Endothelial cell of umbilical vein (primary cell): ENCODE measurements at regions of chr10 and their contacts with region 1.

Region 1: DNA sequence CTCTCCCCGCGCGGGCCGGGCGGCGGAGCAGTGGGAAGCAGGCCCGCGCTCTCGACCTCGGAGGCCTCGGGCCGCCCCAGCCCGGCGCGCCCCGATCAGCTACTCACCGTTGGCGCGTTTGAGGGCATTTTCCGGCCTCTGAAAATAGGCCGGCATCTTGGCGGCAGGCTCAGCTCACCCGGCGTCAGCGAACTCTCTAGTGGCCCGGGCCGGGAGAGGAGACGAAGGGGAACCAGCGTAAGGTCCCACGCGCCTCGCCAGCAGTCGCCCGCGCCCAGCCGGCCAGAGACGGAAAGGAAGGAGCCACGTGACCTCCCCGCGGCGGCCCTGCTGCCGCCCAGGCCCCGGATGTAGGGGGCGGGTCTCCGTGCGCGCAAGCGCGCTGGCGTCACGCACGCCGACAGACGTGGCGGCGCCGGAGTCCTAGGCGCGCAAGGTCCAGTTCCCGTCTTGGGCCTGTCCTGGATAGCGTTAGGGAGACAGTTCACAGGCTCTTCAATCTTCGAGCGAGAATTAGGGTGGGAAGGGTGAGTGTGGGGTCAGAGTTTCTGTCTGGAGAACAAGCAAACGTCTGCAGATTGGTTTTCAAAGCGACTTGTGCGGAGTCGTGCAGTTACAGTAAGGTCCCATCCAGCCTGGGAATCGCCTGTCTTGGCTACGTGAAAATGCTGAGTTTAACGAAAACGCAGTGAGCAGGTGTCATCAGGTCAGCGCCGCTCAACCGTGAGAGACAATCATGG is at the start of gene EIF3A:
- DNase-seq: peak; percentile 95
- H3K4me3 ChIP-seq: peak within 1 kb of the TSS; percentile 80 to 97 (median 97)
- H3K27ac ChIP-seq: peak within 1 kb of the TSS; percentile 94
- H3K4me1 ChIP-seq: peaks cover 19% of the 10 kb centered on the region
- H3K27me3 ChIP-seq: no peaks in the 10 kb centered on the region
- CTCF ChIP-seq: no peak
- POLR2A ChIP-seq: peak; percentile 98
- total RNA-seq, gene EIF3A: 149 and 159 TPM in 2 replicates

Region 2: DNA sequence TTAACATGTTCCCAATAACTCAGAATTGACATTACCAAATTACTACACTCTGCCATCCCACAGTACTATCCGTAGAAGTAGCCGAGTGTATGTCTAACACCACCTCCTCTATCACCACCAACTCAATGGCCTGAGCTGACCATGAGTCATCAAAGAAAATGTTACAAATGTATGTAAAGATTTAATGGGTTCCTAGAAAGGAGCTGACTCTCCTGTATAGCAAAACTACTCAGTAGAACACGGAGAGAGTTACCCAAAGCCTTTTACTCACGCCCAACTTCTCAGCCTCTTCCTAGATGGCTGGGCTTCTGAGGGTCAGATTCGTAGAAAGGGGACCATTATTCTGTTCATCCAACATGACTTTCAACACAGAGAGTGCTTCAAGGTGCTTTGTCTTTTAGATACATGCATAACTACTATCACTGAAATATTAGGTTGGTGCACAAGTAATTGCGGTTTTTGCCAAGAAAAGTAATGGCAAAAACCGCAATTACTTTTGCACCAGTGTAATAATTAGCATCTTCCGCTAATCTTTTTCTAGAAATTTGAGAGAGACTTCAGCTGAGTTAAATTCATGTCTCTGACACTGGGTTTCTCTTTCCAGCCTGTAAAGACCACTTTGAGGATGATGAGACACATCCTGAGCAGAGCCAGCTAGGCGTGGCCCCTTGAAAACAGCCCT is 75.2 kb before region 1 on chr10:
- CTCF ChIA-PET with region 1: no interaction called
- POLR2A ChIA-PET with region 1: no interaction called
- dilution Hi-C with region 1: no loop called
- intact Hi-C with region 1: no loop called
- DNase-seq: no peak
- H3K4me3 ChIP-seq: no peak overlapping the region
- H3K27ac ChIP-seq: no peak overlapping the region
- H3K4me1 ChIP-seq: peaks cover 4% of the 10 kb centered on the region
- H3K27me3 ChIP-seq: no peaks in the 10 kb centered on the region
- CTCF ChIP-seq: no peak
- POLR2A ChIP-seq: no peak

Region 3: GRCh38 chr10:119039161-119039560 is 41.5 kb before region 1 on chr10:
- CTCF ChIA-PET with region 1: no interaction called
- POLR2A ChIA-PET with region 1: no interaction called
- dilution Hi-C with region 1: no loop called
- intact Hi-C with region 1: loop called (anchors 5 kb)
- DNase-seq: no peak
- H3K4me3 ChIP-seq: no peak overlapping the region
- H3K27ac ChIP-seq: no peak overlapping the region
- H3K4me1 ChIP-seq: no peaks in the 10 kb centered on the region
- H3K27me3 ChIP-seq: no peaks in the 10 kb centered on the region
- CTCF ChIP-seq: no peak
- POLR2A ChIP-seq: no peak

Region 4: GRCh38 chr10:119103903-119104652 is 23.4 kb after region 1 on chr10 and contains the start of gene DENND10:
- CTCF ChIA-PET with region 1: no interaction called
- POLR2A ChIA-PET with region 1: interaction called, 3 read pairs
- dilution Hi-C with region 1: no loop called
- intact Hi-C with region 1: loop called (anchors 1 kb)
- DNase-seq: peak; percentile 76
- H3K4me3 ChIP-seq: peak within 1 kb of the TSS; percentile 30 to 72 (median 40)
- H3K27ac ChIP-seq: no peak within 1 kb of the TSS
- H3K4me1 ChIP-seq: peaks cover 22% of the 10 kb centered on the region
- H3K27me3 ChIP-seq: no peaks in the 10 kb centered on the region
- CTCF ChIP-seq: no peak
- POLR2A ChIP-seq: peak; percentile 90
- total RNA-seq, gene DENND10: 50.1 and 54.3 TPM in 2 replicates

Region 5: GRCh38 chr10:119115896-119116295 is 35.2 kb after region 1 on chr10:
- CTCF ChIA-PET with region 1: no interaction called
- POLR2A ChIA-PET with region 1: no interaction called
- dilution Hi-C with region 1: no loop called
- intact Hi-C with region 1: no loop called
- DNase-seq: no peak
- H3K4me3 ChIP-seq: no peak overlapping the region
- H3K27ac ChIP-seq: no peak overlapping the region
- H3K4me1 ChIP-seq: no peaks in the 10 kb centered on the region
- H3K27me3 ChIP-seq: no peaks in the 10 kb centered on the region
- CTCF ChIP-seq: no peak
- POLR2A ChIP-seq: no peak

Region 6: GRCh38 chr10:119165171-119166110 is 84.8 kb after region 1 on chr10 and contains the start of gene SFXN4:
- CTCF ChIA-PET with region 1: no interaction called
- POLR2A ChIA-PET with region 1: no interaction called
- dilution Hi-C with region 1: no loop called
- intact Hi-C with region 1: loop called (anchors 2 kb)
- DNase-seq: peak; percentile 68
- H3K4me3 ChIP-seq: peak within 1 kb of the TSS; percentile 48 to 70 (median 62)
- H3K27ac ChIP-seq: peak within 1 kb of the TSS; percentile 54
- H3K4me1 ChIP-seq: peaks cover 24% of the 10 kb centered on the region
- H3K27me3 ChIP-seq: no peaks in the 10 kb centered on the region
- CTCF ChIP-seq: no peak
- POLR2A ChIP-seq: peak; percentile 81
- total RNA-seq, gene SFXN4: 14.5 and 17.1 TPM in 2 replicates

Region 7: GRCh38 chr10:119178372-119179119 is 97.9 kb after region 1 on chr10 and contains the start of gene PRDX3:
- CTCF ChIA-PET with region 1: no interaction called
- POLR2A ChIA-PET with region 1: no interaction called
- dilution Hi-C with region 1: no loop called
- intact Hi-C with region 1: loop called (anchors 1 kb)
- DNase-seq: peak; percentile 94
- H3K4me3 ChIP-seq: peak within 1 kb of the TSS; percentile 85 to 91 (median 87)
- H3K27ac ChIP-seq: peak within 1 kb of the TSS; percentile 83
- H3K4me1 ChIP-seq: peaks cover 12% of the 10 kb centered on the region
- H3K27me3 ChIP-seq: no peaks in the 10 kb centered on the region
- CTCF ChIP-seq: peak in 1 of 2 donors; percentile 22
- POLR2A ChIP-seq: peak; percentile 99
- total RNA-seq, gene PRDX3: 117 and 124 TPM in 2 replicates

Region 8: DNA sequence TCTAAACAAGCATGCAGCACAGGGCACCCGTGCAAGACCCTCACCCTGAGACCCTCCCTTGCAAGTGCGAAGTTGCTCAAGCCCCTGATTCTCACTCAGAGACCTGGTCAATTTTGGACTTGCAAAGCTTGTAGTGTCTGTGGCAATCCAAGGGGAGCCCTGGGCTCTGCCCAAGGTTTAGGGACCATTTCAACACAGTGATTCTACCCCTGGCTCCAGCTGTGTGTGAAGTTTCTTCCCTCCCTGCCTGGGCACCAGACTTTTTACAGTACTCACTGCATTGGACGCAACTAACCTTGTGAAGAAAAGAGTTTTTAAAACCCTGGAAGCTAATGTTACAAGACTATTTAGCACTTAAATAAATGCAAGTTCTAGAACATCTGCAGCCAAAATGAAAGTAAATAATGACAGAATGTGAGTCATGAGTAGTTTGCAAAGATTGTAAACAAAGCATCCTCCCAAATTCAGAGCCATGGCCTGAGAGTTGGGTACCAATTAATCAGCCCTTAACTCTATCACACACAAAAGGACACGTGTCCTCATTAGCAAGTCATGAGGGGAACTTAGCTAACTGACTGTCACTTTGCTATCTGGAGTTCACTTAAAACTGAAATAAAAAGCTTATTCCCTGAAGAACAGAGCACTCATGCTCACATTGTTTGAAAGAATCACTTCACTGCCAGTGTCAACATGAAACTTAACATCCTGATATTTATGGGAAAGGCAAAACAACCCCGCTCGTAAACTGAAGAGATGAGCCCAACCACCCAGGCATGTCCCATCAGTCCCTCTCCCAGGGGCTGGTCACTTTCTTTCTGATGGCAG is 413.8 kb after region 1 on chr10:
- CTCF ChIA-PET with region 1: no interaction called
- POLR2A ChIA-PET with region 1: no interaction called
- dilution Hi-C with region 1: no loop called
- intact Hi-C with region 1: loop called (anchors 5 kb)
- DNase-seq: no peak
- H3K4me3 ChIP-seq: no peak overlapping the region
- H3K27ac ChIP-seq: no peak overlapping the region
- H3K4me1 ChIP-seq: no peaks in the 10 kb centered on the region
- H3K27me3 ChIP-seq: no peaks in the 10 kb centered on the region
- CTCF ChIP-seq: no peak
- POLR2A ChIP-seq: no peak

Region 9: DNA sequence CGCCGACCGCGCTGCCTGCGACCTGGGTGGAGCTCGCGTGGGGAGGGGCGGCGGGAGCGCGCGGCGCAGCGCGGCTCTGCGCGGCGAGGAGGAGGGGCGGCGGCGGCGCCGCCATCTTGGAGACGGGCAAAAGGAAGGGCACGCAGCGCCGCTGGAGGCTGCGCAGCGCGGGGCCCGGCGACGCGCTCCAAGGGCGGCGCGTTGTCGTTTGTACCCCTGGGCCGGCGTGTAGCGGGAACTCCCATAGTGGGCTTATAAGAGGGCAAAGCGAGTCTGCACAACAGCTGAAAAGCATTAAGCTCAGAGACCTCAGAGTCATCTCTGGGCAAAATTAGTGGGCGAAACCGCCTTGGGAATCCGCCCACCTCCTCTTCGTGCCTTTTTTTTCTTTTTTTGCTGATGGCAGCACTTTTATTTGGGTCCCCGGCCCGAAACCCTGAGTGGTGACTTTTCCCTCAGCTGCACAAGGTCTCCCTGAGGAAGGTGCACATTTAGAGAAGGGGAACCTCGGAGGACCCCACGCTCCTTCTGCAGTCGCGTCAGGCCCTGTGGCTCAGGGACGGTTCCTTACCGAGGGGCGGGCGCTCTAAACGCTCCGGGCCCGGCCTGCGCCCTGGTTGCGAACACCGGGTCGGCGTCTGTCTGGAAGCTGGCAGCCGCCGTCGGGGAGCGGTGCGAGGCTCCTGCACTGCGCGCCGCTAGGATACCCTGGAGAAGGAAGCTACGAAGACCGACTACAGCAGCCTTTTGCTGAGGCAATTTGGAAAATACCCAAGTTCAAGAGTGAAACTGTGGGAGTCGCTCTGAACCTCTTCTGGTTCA is 792.4 kb after region 1 on chr10:
- CTCF ChIA-PET with region 1: no interaction called
- POLR2A ChIA-PET with region 1: no interaction called
- dilution Hi-C with region 1: no loop called
- intact Hi-C with region 1: loop called (anchors 5 kb)
- DNase-seq: peak; percentile 92
- H3K4me3 ChIP-seq: peak overlapping the region; percentile 20 to 96 (median 96)
- H3K27ac ChIP-seq: peak overlapping the region; percentile 81
- H3K4me1 ChIP-seq: peaks cover 18% of the 10 kb centered on the region
- H3K27me3 ChIP-seq: no peaks in the 10 kb centered on the region
- CTCF ChIP-seq: no peak
- POLR2A ChIP-seq: peak; percentile 79